PC-9 (cell line): ENCODE measurements at regions of chr10 and their contacts with region 1.

Region 1: GRCh38 chr10:103278862-103279298 is 1.9 kb downstream of the INA start:
- DNase-seq: peak in 1 of 2 experiments; percentile 10
- H3K4me3 ChIP-seq: peak overlapping the region; percentile 16; the same call in 1 of the 2 replicates
- H3K27ac ChIP-seq: no peak overlapping the region
- H3K4me1 ChIP-seq: peaks cover 22% of the 10 kb centered on the region
- H3K27me3 ChIP-seq: no peaks in the 10 kb centered on the region
- CTCF ChIP-seq: no peak

Region 2: GRCh38 chr10:103254538-103255325 is 24.1 kb before region 1 on chr10:
- CTCF ChIA-PET with region 1: no interaction called
- POLR2A ChIA-PET with region 1: interaction called, 18 read pairs
- intact Hi-C with region 1: no loop called
- DNase-seq: peak in 1 of 2 experiments; percentile 63
- H3K4me3 ChIP-seq: no peak overlapping the region
- H3K27ac ChIP-seq: no peak overlapping the region
- H3K4me1 ChIP-seq: peaks cover 6% of the 10 kb centered on the region
- H3K27me3 ChIP-seq: no peaks in the 10 kb centered on the region
- CTCF ChIP-seq: no peak

Region 3: GRCh38 chr10:103481974-103482531 is 203.2 kb after region 1 on chr10:
- CTCF ChIA-PET with region 1: no interaction called
- POLR2A ChIA-PET with region 1: no interaction called
- intact Hi-C with region 1: no loop called
- DNase-seq: peak in 1 of 2 experiments; percentile 20
- H3K4me3 ChIP-seq: no peak overlapping the region
- H3K27ac ChIP-seq: no peak overlapping the region
- H3K4me1 ChIP-seq: peaks cover 39% of the 10 kb centered on the region
- H3K27me3 ChIP-seq: no peaks in the 10 kb centered on the region
- CTCF ChIP-seq: peak; percentile 70